OCI-LY7 (cell line): ENCODE measurements at regions of chr1 and their contacts with region 1.

Region 1: DNA sequence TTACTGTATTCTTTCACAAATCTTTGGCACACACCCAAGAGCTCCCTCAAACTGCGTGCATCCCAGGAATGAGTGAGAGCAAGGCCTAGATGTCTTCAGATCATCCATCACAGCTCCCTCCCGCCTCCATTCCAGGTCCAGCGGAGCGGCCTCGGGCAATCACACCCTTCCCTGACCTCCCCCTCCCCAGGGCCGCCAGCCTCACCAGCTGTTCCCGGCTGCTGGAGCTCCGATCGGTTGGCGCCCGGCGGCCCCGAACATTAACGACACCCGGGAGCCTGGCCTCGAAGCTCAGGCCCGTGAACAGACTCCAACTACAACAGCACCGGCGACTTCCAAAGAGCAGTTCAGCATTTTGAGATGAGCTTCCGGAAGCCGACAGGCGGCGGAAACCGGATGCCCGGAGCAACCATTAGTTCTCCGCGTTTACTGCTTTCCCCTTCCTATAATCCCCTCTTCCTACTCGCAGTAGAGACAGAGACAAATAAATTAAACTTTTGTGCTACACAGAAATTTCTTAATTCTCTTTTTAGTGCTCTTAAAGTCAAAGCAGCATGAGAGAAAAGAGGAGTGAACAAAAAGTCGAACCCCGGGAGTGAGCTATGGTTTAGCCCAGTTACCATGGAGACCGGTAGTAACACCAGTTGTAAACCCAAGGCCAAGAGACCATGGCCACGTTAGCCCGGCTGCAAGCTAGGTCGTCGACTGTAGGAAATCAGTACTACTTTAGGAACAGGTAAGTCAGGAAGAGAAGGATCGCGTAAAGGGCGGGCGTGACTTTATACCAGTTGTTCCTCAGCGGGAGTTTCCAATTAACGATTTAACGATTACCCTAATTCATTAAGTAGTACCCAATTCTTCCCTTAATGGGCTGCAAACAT is at the starts of genes GPATCH2 and SPATA17:
- DNase-seq: peak; percentile 91
- H3K4me3 ChIP-seq: peak within 1 kb of the TSS; percentile 95
- H3K27ac ChIP-seq: peak within 1 kb of the TSS; percentile 51
- H3K4me1 ChIP-seq: peaks cover 17% of the 10 kb centered on the region
- CTCF ChIP-seq: no peak; the same call in 1 of the 2 replicates
- total RNA-seq, gene GPATCH2: 8.8 and 10.2 TPM in 2 replicates
- total RNA-seq, gene SPATA17: not detected in 2 replicates

Region 2: DNA sequence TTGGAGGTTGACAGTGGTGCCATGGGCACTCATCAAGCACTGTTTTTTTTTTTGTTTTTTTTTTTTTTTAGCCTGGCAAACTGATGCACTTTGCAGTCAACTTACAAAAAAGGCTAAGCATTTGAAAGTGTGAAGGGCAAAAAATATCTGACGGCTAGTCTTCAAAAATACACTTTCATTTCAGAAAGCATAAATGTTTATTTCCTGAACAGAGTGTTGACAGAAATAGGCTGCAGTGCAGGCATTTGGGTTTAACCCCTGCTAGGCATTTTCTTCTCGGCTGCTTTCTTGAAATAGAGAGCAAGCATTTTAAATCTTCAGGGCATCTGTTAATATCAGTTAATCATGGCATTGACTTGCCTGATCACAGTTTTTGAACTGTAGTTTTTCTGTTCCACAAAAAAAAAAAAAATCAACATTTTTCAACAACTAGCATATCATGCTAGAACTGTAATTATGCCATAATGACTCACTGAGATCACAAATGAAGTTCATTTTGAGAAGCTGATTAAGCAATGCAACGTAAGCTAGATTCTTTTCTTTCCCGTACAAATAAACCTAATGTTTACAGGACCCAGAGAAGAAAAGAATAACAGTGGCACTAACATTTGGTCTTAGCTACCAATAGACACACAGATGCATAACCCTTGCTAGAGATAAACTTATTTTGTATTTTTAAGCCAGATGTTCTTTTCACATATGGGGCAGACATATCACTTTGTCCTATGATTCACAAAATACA is 1107.3 kb before region 1 on chr1:
- CTCF ChIA-PET with region 1: no interaction called
- POLR2A ChIA-PET with region 1: no interaction called
- intact Hi-C with region 1: loop called (anchors 5 kb)
- DNase-seq: no peak
- H3K4me3 ChIP-seq: no peak overlapping the region
- H3K27ac ChIP-seq: peak overlapping the region; percentile 16
- H3K4me1 ChIP-seq: peaks cover 36% of the 10 kb centered on the region
- CTCF ChIP-seq: no peak

Region 3: DNA sequence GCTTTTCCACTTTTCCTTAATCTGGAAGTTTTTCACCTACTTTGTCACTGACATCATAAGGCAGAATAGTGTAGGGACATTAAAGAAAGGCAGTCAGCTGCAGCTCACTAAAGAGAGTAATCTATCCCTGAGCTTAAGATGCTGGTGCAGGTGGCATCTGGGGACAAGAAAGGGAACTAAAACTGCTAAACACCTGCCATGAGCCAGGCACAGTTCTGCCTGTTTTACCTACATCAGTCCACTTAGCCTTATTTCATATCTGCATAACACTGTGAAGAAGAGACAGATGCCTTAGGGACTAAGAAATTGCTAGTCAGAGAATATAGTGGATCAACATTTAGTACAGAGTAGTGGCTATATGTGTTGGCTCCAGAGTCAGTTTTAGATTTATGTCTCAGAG is 88.1 kb before region 1 on chr1:
- CTCF ChIA-PET with region 1: no interaction called
- POLR2A ChIA-PET with region 1: interaction called, 9 read pairs
- intact Hi-C with region 1: loop called (anchors 2 kb)
- DNase-seq: peak; percentile 92
- H3K4me3 ChIP-seq: no peak overlapping the region
- H3K27ac ChIP-seq: peak overlapping the region; percentile 83
- H3K4me1 ChIP-seq: peaks cover 51% of the 10 kb centered on the region
- CTCF ChIP-seq: no peak

Region 4: GRCh38 chr1:217614200-217614712 is 16.7 kb before region 1 on chr1:
- CTCF ChIA-PET with region 1: no interaction called
- POLR2A ChIA-PET with region 1: interaction called, 10 read pairs
- intact Hi-C with region 1: no loop called
- DNase-seq: no peak
- H3K4me3 ChIP-seq: no peak overlapping the region
- H3K27ac ChIP-seq: no peak overlapping the region
- H3K4me1 ChIP-seq: no peaks in the 10 kb centered on the region
- CTCF ChIP-seq: no peak

Region 5: DNA sequence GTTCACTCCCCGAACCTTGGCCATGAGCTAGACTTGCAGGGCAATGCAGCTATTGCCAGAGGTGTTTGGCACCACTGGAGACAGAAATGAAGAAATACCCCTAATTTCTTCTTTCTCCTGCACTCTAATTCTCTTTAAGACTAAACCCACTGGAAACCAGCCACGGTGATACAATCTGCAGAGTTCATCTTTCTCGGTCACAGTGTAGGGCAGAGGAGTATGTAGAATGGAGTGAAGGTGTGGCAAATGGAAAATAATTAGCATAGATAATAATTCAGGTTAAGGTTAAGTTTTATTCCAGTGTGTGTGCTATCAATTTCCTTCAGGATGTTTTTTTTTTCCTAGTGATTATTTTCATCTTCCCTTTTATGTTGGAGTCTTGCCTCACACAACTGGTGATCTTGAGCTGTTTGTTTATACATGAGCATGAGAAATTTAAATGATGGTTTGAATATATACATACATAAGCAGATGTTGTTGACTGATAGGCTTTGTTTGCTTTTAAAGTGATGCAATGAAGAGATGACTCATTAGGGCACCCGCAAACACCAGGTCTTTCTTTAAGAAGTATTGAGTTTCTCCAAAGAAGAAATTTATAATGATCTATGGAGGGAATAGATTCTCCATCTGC is 82.1 kb after region 1 on chr1:
- CTCF ChIA-PET with region 1: no interaction called
- POLR2A ChIA-PET with region 1: no interaction called
- intact Hi-C with region 1: no loop called
- DNase-seq: no peak
- H3K4me3 ChIP-seq: no peak overlapping the region
- H3K27ac ChIP-seq: no peak overlapping the region
- H3K4me1 ChIP-seq: no peaks in the 10 kb centered on the region
- CTCF ChIP-seq: no peak